ENCODE measurements at regions of chr19 and their contacts with region 1.

Region 1: DNA sequence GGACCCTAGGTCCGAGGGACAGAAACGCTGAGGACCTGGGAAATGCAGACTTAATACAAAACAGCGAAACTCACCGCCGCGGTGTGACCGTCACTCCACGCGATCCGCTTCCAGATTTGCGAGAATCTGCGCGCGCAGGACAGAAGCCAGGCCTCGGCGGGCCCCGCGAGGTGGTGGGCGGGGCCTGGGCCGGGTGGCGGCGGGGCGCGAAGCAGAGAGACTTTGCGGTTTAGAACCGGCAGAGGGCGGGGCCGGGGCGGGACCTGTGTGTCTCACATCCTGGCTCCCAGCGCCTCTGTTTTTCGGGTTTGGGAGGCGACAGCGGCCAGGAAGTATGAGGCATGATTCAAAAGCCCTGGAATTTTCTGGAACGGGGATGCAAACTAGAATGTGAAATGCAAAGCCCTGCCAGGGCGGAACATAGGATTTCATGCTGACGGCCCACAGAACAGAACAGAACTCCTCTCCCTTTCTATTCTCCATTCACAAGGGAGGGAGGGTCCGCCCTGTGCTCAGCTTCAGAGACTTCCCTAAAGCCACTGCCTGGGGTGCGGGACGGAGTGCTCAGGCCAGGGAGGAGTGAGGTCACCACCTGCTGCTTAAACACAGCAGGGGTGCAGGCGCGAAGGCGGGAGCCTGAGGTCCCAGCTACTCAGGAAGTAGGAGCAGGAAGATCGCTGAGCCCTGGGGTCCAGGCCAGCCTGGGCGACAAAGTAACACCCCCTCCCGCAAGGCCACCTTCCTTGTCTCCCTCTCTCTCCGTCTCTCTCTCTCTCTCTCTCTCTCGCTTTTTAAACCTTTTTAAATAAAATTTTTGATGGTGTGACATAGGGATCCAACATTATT is 44.3 kb downstream of the ZNF611 start:
- DNase-seq: peak; percentile 86 to 92 (median 89)
- H3K4me3 ChIP-seq: peak overlapping the region; percentile 66 to 90
- H3K4me3 Mint-ChIP-seq: peak overlapping the region; percentile 90 to 99 (median 96)
- H3K27ac ChIP-seq: peak overlapping the region; percentile 78
- H3K27ac Mint-ChIP-seq: peak overlapping the region; percentile 88 to 96 (median 94)
- H3K4me1 ChIP-seq: peaks cover 23% of the 10 kb centered on the region
- H3K4me1 Mint-ChIP-seq: peaks cover 18 to 35% (median 26%) of the 10 kb centered on the region in 4 donors
- H3K27me3 ChIP-seq: no peaks in the 10 kb centered on the region
- H3K27me3 Mint-ChIP-seq: no peaks in the 10 kb centered on the region

Region 2: DNA sequence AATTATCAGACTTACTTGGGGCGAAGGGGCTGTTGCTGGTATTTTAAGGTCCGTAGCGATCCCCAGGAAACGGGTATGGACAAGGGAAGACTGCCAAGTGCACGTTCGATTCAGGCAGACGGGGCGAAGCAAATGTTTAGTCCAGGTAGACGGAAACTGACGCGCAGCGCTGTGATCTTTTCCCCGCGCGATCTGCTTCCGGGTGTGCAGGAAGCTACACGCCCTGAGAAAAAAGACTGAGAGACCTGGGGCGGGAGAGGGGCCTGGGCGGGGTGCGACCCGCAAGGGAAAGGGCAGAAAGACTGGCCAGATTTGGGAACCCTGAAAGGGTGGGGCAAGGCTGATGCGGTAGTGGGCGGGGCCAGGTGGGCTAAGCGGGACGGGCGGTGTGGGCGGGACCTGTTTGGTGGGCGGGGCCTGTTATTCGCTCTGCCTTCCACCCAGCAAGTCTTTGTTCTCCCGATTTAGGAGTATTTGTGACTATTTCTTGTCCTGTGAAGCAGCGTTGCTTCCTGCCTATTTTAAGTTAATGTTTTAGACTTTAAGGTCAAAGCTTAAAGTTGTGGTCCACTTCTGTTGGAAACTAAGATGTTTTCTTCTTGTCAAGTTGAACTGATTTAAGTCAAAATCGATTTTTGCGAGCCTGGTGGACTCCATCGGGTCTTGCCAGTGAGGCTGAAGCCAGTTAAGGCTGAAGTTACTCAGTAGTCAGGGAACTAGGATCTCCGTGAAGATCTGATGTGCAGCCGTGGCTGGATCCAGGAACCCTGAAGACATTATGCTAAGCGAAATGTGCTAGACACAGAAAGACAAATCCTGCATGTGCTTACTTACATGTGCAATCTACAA is 519.0 kb before region 1 on chr19 and contains the start of gene ZNF836:
- CTCF ChIA-PET with region 1: no interaction called
- POLR2A ChIA-PET with region 1: no interaction called
- intact Hi-C with region 1: loop called (anchors 2 kb)
- DNase-seq: peak; percentile 89 to 93 (median 92)
- H3K4me3 ChIP-seq: peak within 1 kb of the TSS; percentile 90 to 93
- H3K4me3 Mint-ChIP-seq: peak within 1 kb of the TSS; percentile 89 to 99 (median 96)
- H3K27ac ChIP-seq: peak within 1 kb of the TSS; percentile 80
- H3K27ac Mint-ChIP-seq: peak within 1 kb of the TSS; percentile 83 to 97 (median 97)
- H3K4me1 ChIP-seq: peaks cover 25% of the 10 kb centered on the region
- H3K4me1 Mint-ChIP-seq: peaks cover 23 to 39% (median 35%) of the 10 kb centered on the region in 4 donors
- H3K27me3 ChIP-seq: no peaks in the 10 kb centered on the region
- H3K27me3 Mint-ChIP-seq: no peaks in the 10 kb centered on the region
- total RNA-seq, gene ZNF836: 47.2 to 54.7 TPM

Region 3: DNA sequence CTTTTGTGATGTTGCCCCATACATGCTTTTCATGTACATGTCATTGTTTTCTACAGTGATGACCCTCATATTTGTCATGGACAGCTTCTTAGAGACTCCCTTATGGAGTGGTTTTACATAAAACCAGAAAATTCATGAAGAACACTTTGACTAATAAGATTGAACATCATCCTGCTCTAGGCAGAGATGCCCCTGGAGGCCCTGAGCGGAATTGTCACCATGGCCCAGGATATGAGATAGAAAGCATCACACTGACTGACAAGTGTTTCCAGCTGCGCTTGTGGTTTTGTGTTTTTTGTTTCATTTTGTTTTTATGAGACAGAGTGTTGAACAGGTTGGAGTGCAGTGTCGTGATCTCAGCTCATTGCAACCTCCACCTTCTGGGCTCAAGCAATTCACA is 98.3 kb before region 1 on chr19:
- CTCF ChIA-PET with region 1: no interaction called
- POLR2A ChIA-PET with region 1: no interaction called
- intact Hi-C with region 1: no loop called
- DNase-seq: no peak
- H3K4me3 ChIP-seq: no peak overlapping the region
- H3K4me3 Mint-ChIP-seq: no peak overlapping the region
- H3K27ac ChIP-seq: no peak overlapping the region
- H3K27ac Mint-ChIP-seq: no peak overlapping the region
- H3K4me1 ChIP-seq: no peaks in the 10 kb centered on the region
- H3K4me1 Mint-ChIP-seq: peaks cover 0 to 5% (median 2%) of the 10 kb centered on the region in 4 donors
- H3K27me3 ChIP-seq: no peaks in the 10 kb centered on the region
- H3K27me3 Mint-ChIP-seq: no peaks in the 10 kb centered on the region

Region 4: GRCh38 chr19:52626915-52627314 is 63.7 kb before region 1 on chr19:
- CTCF ChIA-PET with region 1: no interaction called
- POLR2A ChIA-PET with region 1: no interaction called
- intact Hi-C with region 1: no loop called
- DNase-seq: no peak
- H3K4me3 ChIP-seq: no peak overlapping the region
- H3K4me3 Mint-ChIP-seq: no peak overlapping the region
- H3K27ac ChIP-seq: no peak overlapping the region
- H3K27ac Mint-ChIP-seq: no peak overlapping the region
- H3K4me1 ChIP-seq: no peaks in the 10 kb centered on the region
- H3K4me1 Mint-ChIP-seq: peaks cover 8 to 20% (median 17%) of the 10 kb centered on the region in 4 donors
- H3K27me3 ChIP-seq: no peaks in the 10 kb centered on the region
- H3K27me3 Mint-ChIP-seq: no peaks in the 10 kb centered on the region

Region 5: DNA sequence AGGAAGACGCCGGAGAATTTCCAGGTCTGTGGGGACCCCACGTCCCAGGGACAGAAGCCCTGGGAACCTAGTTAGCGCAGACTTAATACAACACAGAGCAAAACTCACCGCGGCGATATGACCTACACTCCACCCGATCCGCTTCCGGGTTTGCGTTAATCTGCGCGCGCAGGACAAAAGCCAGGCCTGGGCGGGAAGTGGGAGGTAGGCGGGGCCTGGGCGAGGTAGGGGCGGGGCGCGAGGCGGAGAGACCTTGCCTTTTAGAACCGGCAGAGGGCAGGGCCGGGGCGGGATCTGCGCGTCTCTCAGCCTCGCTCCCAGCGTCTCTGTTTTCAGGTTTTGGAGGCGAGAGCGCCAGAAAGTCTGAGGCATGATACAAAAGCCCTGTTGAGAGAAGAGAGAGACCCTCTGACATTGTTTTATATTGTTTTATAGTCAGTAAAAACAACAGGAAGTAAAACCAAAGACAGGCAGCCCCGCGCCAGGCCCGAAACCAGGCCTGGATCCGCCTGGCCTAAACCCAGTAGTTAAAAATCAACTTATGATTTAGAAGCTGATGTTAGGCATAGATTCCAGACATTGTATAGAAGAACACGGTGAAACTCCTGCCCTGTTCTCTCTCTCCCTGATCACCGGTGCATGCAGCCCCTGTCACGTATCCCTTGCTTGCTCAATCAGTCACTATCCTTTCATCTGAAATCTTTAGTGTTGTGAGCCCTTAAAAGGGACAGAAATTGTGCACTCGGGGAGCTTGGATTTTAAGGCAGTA is 44.5 kb after region 1 on chr19 and contains the start of gene ZNF611:
- CTCF ChIA-PET with region 1: no interaction called
- POLR2A ChIA-PET with region 1: interaction called, 3 read pairs
- intact Hi-C with region 1: loop called (anchors 1 kb)
- DNase-seq: peak; percentile 98 to 99 (median 98)
- H3K4me3 ChIP-seq: peak within 1 kb of the TSS; percentile 94 to 98
- H3K4me3 Mint-ChIP-seq: peak within 1 kb of the TSS; percentile 90 to 97 (median 94)
- H3K27ac ChIP-seq: peak within 1 kb of the TSS; percentile 80
- H3K27ac Mint-ChIP-seq: peak within 1 kb of the TSS; percentile 94 to 98 (median 97)
- H3K4me1 ChIP-seq: peaks cover 22% of the 10 kb centered on the region
- H3K4me1 Mint-ChIP-seq: peaks cover 17 to 34% (median 25%) of the 10 kb centered on the region in 4 donors
- H3K27me3 ChIP-seq: no peaks in the 10 kb centered on the region
- H3K27me3 Mint-ChIP-seq: no peaks in the 10 kb centered on the region
- total RNA-seq, gene ZNF611: 52.8 to 53.7 TPM

Measured in CD4-positive, alpha-beta memory T cell (primary cell).